ENCODE measurements at regions of chr16 and their contacts with region 1.

Region 1: DNA sequence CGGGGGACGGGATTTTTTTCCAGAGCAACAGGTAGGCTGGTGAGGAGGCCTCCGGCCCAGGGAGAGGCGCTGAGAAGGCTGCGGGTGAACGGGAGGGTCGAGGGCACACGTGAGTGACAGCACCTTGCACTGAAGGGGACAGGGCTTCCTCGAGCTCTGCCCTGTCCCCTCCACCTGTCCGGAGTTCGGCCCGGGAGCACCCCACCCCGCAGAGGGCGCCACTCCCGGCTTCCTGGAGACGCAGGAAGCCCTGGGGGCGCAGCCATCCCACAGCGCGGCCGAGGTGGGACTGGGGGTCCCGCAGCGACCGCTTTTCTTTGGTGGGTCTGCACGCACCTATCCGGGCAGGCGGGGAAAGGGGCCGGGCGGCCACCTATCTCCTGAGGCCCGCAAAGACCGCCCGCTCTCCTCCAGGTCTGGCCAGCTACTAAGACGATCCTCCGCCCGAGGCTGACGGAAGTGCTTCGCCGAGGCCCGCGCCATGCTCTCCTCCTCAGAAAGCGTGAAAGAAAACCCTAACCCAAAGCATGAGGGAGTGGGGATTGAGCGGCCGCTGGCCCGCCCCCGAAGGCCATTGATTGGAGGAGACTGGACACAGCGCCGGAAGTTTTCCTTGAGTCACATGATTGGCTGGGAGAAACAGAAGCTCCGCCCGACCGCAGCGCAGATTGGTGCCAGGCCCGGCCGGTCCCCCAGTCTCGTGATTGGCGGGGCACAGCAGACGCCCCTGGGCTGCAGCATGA is 34.3 kb downstream of the DDX19A start:
- DNase-seq: peak; percentile 94
- H3K4me3 ChIP-seq: peak overlapping the region; percentile 81
- H3K27ac ChIP-seq: peak overlapping the region; percentile 87
- H3K27me3 ChIP-seq: no peaks in the 10 kb centered on the region
- CTCF ChIP-seq: peak; percentile 47

Region 2: GRCh38 chr16:70251629-70252354 is 129.2 kb before region 1 on chr16 and contains the start of gene EXOSC6:
- CTCF ChIA-PET with region 1: no interaction called
- POLR2A ChIA-PET with region 1: no interaction called
- DNase-seq: peak; percentile 69
- H3K4me3 ChIP-seq: peak within 1 kb of the TSS; percentile 58
- H3K27ac ChIP-seq: no peak within 1 kb of the TSS
- H3K27me3 ChIP-seq: no peaks in the 10 kb centered on the region
- CTCF ChIP-seq: peak; percentile 91
- polyA plus RNA-seq, gene EXOSC6: 7.4 and 8.5 TPM in 2 replicates

Region 3: GRCh38 chr16:70304892-70305448 is 76.1 kb before region 1 on chr16:
- CTCF ChIA-PET with region 1: no interaction called
- POLR2A ChIA-PET with region 1: no interaction called
- DNase-seq: no peak
- H3K4me3 ChIP-seq: no peak overlapping the region
- H3K27ac ChIP-seq: no peak overlapping the region
- H3K27me3 ChIP-seq: no peaks in the 10 kb centered on the region
- CTCF ChIP-seq: no peak

Region 4: DNA sequence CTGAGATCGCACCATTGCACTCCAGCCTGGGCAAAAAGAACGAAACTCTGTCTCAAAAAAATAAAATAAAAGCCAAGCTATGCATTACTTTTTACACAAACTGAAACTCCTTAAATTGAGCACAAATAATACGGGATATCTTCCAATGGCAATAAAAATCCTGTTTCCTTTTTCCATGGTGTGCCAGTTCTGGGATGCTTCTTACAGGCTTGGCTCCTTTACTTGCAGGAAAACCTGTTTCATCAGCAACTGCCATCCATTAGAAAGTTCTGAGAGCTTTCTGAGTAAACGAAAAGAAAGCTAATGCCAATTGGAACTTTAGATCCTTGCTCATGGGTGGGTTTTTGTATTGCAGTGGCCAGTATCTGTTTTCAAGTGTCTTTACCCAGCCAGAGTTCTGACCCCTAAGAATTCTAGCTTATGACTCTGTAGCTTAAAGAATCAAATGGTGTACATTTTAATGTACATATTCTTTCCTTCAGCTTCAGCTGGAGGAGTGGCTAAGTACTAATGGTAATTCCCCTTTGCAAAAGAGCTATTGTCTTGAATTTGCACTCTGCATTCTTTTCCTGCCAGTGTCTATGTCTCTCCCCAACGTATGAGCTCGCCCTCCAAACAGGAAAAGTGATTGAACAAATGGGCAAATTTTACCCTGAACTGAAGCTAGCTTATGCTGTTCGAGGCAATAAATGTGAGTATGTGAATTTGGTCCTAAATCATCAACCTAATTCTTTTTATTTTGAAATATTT is 55.9 kb before region 1 on chr16:
- CTCF ChIA-PET with region 1: no interaction called
- POLR2A ChIA-PET with region 1: no interaction called
- DNase-seq: no peak
- H3K4me3 ChIP-seq: no peak overlapping the region
- H3K27ac ChIP-seq: no peak overlapping the region
- H3K27me3 ChIP-seq: no peaks in the 10 kb centered on the region
- CTCF ChIP-seq: no peak

Region 5: DNA sequence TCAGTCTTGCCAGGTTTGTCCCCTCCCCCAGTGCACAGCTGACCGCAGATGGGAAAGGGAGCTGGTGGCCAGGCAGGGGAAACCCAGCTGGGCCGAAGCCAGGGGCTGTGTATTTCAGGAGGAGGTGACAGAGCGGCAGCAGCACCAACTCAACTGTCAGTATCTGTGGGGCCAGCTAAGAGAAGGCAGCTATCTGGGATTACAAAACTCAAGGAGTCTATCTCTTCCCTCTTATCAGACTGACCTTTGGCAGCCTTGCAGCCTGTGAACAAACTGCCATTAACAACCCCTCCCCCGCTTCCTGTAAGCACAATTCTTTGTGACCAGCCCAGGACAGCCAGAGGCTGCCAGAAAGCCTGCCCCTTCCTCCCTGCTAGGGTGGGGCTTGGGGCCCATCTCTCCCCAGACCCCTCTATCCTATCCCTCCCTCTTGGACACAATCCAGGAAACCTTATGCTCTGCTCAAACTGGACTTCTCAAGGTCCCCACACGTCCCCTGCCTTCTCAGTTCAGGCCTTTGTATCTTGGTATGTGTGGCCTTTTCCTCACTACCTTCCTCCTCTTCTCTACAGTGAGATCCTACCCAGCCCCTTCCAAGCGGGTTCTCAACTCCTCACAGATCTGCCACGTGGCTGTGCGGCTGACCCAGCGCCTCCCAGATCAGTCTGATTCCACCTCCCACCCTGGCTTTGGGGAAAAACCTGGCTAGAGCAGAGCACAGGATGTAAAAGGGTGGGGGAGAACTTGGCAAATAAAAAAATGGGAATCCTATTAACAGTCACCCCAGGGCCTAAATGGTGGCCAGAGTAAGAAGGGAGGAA is 47.4 kb after region 1 on chr16:
- CTCF ChIA-PET with region 1: no interaction called
- POLR2A ChIA-PET with region 1: interaction called, 15 read pairs
- DNase-seq: peak; percentile 87
- H3K4me3 ChIP-seq: peak overlapping the region; percentile 22
- H3K27ac ChIP-seq: peak overlapping the region; percentile 69
- H3K27me3 ChIP-seq: no peaks in the 10 kb centered on the region
- CTCF ChIP-seq: no peak

Region 6: DNA sequence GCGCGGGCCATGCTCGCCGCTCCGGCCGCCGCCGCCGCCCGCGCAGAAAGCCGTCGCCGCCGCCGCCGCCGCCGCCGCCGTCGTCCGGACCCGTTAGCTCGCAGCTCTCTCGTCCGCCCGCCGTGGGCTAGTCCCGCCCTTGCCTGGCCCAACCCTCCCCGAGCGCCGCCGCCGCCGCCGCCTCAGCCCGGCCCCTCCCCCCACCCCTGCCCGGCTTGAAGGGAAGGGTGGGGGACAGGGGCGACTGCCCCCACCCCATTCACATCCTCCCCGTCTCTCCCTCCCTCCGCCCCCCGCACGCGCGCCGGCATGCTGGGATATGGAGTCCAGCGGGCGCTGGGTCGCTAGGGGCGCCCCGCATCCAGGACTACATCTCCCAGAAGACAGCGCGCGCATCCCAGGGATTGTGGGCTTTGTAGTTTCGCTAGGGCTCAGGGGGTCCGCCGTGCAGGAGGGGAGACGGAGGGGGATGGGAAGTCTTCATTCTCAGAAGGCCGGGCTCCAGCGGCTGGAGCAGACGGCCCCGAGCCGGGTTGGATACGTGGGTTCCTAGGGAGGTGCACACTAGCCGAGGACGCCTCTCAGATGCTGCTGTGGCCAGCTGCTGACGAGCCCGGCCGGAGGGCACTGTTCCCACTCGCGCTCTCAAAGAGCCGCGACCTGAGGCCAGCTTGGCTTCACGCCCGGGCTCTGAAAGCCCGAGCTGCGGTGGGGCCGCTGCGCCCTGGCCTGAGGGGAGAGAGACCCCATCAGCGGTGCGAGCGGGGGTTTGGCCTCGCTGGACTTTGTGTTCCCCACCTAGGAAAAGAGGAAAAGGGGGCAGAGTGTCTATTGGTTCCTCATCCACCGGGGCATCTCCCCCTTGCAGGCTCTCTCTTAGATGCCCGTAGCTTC is 58.2 kb after region 1 on chr16 and contains the start of gene ST3GAL2:
- CTCF ChIA-PET with region 1: no interaction called
- POLR2A ChIA-PET with region 1: interaction called, 31 read pairs
- DNase-seq: peak; percentile 84
- H3K4me3 ChIP-seq: peak within 1 kb of the TSS; percentile 72
- H3K27ac ChIP-seq: peak within 1 kb of the TSS; percentile 31
- H3K27me3 ChIP-seq: no peaks in the 10 kb centered on the region
- CTCF ChIP-seq: 0 out of 2 replicates have a peak, but pooled peaks have one; percentile 14
- polyA plus RNA-seq, gene ST3GAL2: 12.4 and 18.2 TPM in 2 replicates

Region 7: DNA sequence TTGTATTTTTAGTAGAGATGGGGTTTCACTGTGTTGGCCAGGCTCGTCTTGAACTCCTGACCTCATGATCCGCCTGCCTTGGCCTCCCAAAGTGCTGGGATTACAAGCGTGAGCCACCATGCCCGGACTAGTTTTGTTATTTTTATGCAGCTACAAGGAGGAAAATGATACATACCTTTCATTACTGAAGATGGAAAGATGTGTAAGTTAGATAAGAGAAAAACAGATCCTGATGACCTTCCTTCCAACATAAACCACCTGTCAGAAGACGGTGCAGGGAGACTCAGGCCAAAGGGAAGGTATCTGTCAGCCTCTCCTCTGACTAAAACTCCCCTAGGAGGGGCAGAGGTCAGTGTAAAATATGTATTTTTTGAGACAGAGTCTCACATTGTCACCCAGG is 96.3 kb after region 1 on chr16:
- CTCF ChIA-PET with region 1: no interaction called
- POLR2A ChIA-PET with region 1: interaction called, 11 read pairs
- DNase-seq: no peak
- H3K4me3 ChIP-seq: no peak overlapping the region
- H3K27ac ChIP-seq: no peak overlapping the region
- H3K27me3 ChIP-seq: no peaks in the 10 kb centered on the region
- CTCF ChIP-seq: no peak